Calu3 (cell line): ENCODE measurements at regions of chr10 and their contacts with region 1.

Region 1: GRCh38 chr10:67331121-67331910 is 364.7 kb downstream of the CTNNA3 start:
- DNase-seq: no peak
- H3K4me3 Mint-ChIP-seq: no peak overlapping the region
- H3K27ac Mint-ChIP-seq: no peak overlapping the region
- H3K4me1 Mint-ChIP-seq: no peaks in the 10 kb centered on the region
- H3K27me3 Mint-ChIP-seq: no peaks in the 10 kb centered on the region
- CTCF ChIP-seq: no peak

Region 2: DNA sequence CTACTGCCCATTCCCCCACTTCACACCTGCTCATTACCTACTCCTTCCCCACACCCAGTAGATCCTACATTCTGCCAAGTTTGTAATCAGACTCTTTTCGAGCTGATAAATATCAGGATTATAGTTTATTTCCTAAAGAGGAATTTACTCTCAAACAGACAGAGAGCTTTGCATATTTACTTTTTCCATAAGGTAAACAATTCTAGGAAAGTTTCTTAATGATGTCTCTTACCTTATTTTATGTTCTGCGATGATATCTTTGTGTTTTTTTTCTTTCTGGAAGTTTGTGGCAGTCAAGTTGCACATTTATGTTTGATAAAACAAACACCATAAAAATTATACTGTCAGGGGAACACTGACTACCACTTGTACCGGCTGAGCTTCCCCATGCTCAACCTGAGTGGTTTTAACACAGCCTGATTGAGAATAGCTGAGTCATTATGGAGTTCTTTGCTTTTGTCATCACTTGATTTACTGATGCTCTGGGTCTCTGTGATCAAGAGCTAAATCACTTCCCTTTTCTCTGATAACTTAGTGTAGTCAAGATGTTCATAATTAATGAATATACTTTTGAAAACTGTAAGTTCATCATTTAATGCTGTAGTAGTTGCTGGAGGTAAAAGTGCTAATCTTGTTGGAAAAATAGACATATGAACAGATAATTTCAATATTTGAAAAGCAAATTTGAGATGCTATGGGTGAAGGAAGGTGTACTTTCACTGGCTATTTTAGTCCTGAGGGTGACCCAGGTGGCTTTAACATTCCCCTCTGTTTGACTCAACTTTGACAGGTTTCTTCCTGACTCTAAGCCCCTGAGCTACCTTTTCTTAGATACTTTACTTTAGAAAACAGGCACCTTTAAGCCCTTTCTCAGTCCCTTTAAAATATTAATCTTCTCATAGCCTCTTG is 1440.0 kb before region 1 on chr10:
- CTCF ChIA-PET with region 1: interaction called, 14 read pairs
- intact Hi-C with region 1: no loop called
- DNase-seq: no peak
- H3K4me3 Mint-ChIP-seq: no peak overlapping the region
- H3K27ac Mint-ChIP-seq: no peak overlapping the region
- H3K4me1 Mint-ChIP-seq: peaks cover 13% of the 10 kb centered on the region
- H3K27me3 Mint-ChIP-seq: no peaks in the 10 kb centered on the region
- CTCF ChIP-seq: no peak

Region 3: GRCh38 chr10:67433276-67433675 is 102.0 kb after region 1 on chr10:
- CTCF ChIA-PET with region 1: no interaction called
- intact Hi-C with region 1: no loop called
- DNase-seq: no peak
- H3K4me3 Mint-ChIP-seq: no peak overlapping the region
- H3K27ac Mint-ChIP-seq: no peak overlapping the region
- H3K4me1 Mint-ChIP-seq: no peaks in the 10 kb centered on the region
- H3K27me3 Mint-ChIP-seq: no peaks in the 10 kb centered on the region
- CTCF ChIP-seq: no peak

Region 4: DNA sequence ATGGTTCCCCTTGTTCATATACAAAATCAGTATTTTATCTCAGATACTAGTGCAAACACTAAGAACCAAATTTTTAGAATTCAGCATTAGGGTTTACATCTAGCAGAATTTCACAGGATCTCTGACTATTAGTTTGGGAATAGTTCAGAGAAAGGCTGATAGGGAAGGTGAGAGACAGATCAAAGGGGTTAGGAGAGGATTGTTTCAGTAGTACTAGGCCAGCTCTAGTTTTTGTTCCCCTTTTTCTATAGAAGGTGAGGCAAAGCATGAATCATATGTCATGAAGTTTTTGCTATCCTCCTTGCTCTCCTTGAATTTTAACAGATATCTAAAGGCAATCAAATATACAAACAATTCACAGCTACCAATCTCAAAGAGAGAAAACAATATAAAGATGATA is 390.8 kb after region 1 on chr10:
- CTCF ChIA-PET with region 1: no interaction called
- intact Hi-C with region 1: no loop called
- DNase-seq: no peak
- H3K4me3 Mint-ChIP-seq: no peak overlapping the region
- H3K27ac Mint-ChIP-seq: no peak overlapping the region
- H3K4me1 Mint-ChIP-seq: no peaks in the 10 kb centered on the region
- H3K27me3 Mint-ChIP-seq: peaks cover 55% of the 10 kb centered on the region
- CTCF ChIP-seq: no peak